Activated naive CD4-positive, alpha-beta T cell treated with anti-CD3 and anti-CD28 coated beads for 36 hours (primary cell): ENCODE measurements at regions of chr2 and their contacts with region 1.

Region 1: DNA sequence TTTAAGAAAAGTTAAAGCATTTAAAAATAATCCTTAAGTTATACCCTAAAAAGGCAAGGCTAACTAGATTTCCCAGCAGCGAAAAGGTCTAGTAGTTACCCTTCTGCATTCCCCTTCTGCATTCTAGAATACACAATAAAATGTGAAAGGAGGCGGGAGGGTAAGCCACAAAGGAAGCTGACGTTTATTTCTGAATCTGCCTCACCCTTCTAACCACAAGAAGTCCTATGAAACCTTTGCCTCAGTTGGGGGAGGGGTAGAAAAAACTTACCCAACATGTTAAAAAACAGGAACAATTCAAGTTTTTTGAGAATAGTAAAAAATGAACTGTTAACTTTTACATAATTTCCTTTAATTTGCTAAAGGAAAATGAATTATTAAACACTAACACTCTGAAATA is 11.3 kb downstream of the STK17B start:
- DNase-seq: peak; percentile 77
- H3K4me3 Mint-ChIP-seq: peak overlapping the region; percentile 36
- H3K27ac Mint-ChIP-seq: peak overlapping the region; percentile 96
- H3K4me1 Mint-ChIP-seq: peaks cover 67% of the 10 kb centered on the region
- H3K27me3 Mint-ChIP-seq: no peaks in the 10 kb centered on the region

Region 2: DNA sequence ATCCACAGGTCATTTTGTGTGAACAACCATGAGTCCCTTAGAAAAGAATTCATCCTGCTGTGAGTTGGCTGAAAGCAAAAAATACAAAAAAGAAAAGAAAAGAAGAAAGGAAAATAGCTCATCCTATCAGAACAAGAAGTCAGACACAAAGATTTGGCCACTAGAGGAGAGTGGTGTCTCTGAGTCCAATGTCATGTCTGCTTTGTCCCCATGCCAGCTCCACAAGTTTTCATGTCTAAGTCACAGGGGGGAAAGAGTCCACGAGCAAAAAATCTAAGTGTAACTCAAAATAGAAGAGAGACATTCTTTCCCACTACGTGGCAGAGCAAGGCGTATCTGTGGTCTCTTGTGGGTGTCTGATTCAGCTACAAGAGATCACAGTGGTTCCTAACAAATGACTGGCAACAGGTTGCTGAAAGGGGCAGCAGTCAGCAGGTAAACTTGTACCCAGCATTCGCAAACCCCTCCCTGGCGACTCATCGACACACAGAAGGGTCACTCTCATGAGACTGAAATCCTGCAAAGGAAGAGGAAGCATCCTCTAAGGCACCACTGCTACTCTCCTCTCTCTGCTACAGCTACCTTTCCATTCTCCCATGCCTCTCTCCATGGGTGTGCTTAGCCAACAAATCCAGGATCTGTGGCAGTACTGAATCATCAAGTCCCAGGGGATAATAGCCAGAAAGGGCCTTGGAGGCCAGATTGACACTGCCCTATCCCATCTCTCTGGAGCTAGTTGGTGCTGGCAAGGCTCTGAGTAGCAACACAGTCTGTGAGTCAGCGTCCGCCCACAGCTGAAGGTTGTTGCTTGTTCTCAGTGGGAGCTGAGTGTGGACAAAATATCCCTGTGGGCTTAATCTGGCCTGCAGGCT is 626.1 kb before region 1 on chr2:
- CTCF ChIA-PET with region 1: no interaction called
- intact Hi-C with region 1: loop called (anchors 2 kb)
- DNase-seq: peak; percentile 85
- H3K4me3 Mint-ChIP-seq: peak overlapping the region; percentile 75
- H3K27ac Mint-ChIP-seq: peak overlapping the region; percentile 98
- H3K4me1 Mint-ChIP-seq: peaks cover 79% of the 10 kb centered on the region
- H3K27me3 Mint-ChIP-seq: no peaks in the 10 kb centered on the region

Region 3: DNA sequence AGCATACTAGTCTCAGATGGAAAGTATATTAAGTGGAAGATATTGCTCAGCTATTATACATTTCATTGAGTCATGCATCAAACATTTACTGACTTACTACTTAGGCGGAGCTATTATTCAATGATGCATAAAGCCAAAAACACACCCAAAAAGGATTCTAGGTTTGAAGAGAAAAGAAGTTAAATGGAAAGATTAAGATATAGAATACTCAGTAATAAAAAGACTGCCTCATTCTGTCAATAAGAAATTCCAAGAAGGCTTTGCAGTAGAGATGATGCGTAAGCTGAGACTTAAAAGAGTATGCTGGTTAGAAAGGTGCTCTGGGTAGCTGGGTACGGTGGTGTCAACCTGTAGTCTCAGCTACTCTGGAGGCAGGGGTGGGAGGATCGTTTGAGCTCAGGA is 16.4 kb before region 1 on chr2:
- CTCF ChIA-PET with region 1: interaction called, 9 read pairs
- intact Hi-C with region 1: loop called (anchors 1 kb)
- DNase-seq: no peak
- H3K4me3 Mint-ChIP-seq: peak overlapping the region; percentile 29
- H3K27ac Mint-ChIP-seq: peak overlapping the region; percentile 89
- H3K4me1 Mint-ChIP-seq: peaks cover 70% of the 10 kb centered on the region
- H3K27me3 Mint-ChIP-seq: no peaks in the 10 kb centered on the region

Region 4: DNA sequence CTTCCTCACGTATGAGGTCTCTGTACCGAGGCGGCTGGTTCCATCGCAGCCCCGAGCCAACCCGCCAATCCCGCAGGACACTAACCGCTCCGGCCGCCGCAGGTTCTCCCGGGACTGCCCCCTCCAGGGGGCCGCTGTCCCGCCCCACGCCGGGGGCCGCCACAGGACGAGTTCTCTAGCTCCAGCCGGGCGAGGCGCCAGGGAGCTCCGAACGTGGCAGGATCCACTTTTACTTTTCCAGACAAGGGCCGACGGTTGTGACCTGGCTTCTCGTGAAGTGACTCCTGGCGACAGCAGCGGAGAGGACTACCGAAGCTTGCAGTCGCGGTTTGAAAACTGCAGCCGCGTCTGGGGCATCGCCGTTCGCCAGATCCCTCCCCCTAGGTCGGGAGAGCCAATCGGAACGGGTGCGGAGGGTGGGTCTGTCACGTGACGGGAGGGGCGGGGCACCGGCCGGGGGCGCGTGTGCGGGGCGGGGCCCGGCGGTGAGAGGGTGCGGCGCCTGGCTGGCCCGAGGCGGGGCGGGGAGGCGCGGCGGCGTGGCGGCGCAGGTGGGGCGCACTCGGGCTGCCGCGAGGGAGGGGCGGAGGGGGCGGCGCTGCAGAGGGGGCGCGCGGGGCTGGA is 11.3 kb after region 1 on chr2 and contains the start of gene STK17B:
- CTCF ChIA-PET with region 1: interaction called, 7 read pairs
- intact Hi-C with region 1: loop called (anchors 1 kb)
- DNase-seq: peak; percentile 98
- H3K4me3 Mint-ChIP-seq: peak within 1 kb of the TSS; percentile 93
- H3K27ac Mint-ChIP-seq: peak within 1 kb of the TSS; percentile 92
- H3K4me1 Mint-ChIP-seq: peaks cover 34% of the 10 kb centered on the region
- H3K27me3 Mint-ChIP-seq: no peaks in the 10 kb centered on the region
- total RNA-seq, gene STK17B: 141 to 143 TPM

Region 5: DNA sequence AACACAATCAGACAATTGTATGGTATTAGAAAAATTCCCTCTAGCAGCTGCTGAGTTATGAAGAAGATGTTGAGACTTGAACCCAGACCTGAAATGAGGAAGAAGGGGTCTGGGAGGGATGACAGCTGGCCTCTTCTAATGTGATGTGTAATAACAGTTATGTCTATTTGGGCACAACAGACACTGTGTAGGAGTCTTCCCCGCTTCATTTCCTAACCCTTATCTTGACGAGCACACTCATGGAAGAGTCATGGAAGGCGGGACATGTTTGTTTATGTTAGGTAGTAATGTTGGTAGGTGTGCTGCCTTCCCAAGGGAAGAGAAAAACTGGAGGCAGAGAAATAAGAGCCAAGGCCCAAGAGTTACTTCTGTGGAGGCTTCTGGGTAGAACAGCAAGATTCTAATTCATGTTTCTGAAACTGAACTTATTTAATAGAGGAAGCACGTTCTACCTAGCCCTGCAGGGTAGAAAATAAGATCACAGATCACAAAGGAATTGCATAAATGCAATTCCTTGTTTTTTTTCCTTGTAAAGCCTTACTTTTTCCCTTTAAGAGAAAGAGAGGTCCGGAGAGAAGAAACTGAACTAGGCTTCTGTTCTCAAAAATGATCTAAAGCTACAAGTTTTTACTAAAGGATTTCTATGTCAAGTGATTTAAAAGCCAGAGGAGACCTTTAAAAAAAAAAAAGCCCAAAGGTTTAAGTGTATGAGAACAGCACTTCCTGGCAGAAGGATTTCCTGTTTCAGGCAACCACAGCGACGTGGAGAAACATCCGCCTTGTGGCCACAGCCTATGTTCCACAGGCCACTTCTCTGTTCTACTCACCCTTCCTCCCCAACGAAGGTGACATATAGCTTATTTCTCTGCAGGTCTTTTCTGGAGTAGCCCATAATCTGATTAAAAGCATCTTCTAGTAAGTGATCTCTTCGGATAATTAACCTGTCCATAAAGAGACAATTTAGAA is 79.8 kb after region 1 on chr2:
- CTCF ChIA-PET with region 1: interaction called, 3 read pairs
- intact Hi-C with region 1: loop called (anchors 1 kb)
- DNase-seq: peak; percentile 93
- H3K4me3 Mint-ChIP-seq: peak overlapping the region; percentile 49
- H3K27ac Mint-ChIP-seq: peak overlapping the region; percentile 88
- H3K4me1 Mint-ChIP-seq: peaks cover 85% of the 10 kb centered on the region
- H3K27me3 Mint-ChIP-seq: no peaks in the 10 kb centered on the region

Region 6: DNA sequence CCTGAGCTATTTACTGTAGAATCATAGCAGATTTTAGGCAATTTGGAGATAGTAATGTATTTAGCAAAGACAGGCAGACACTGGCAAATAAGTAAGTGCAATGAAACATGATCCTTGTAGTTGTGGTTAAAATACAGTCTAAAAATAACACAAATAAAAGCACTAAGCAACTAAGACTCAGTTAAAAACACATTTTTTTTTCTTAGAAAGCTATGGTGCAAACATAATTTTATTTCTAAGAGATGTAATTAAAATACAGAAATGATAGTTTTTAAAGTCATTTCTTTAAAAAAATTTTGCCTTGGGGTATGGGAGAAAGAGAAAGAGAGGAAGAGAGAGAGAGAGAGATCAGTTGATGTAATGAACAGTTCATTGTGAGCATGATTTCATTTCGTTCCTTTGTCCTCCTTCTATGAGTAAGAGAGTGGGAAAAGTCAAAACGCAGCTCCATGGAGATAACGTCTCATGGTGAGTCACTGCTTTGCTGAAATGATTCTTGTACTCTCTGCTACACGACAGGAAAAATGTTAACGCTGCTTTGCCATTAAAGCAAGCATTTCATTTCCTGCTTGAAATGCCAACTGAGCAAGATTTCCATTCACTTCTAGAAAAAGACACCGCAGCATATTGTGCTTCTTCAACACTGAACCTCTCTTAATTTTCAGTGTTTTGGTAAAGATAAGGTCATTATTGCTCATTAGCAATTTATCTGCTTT is 827.7 kb after region 1 on chr2:
- CTCF ChIA-PET with region 1: no interaction called
- intact Hi-C with region 1: loop called (anchors 5 kb)
- DNase-seq: peak; percentile 76
- H3K4me3 Mint-ChIP-seq: peak overlapping the region; percentile 17
- H3K27ac Mint-ChIP-seq: peak overlapping the region; percentile 98
- H3K4me1 Mint-ChIP-seq: peaks cover 78% of the 10 kb centered on the region
- H3K27me3 Mint-ChIP-seq: no peaks in the 10 kb centered on the region

Region 7: GRCh38 chr2:197293252-197294007 is 1133.3 kb after region 1 on chr2:
- CTCF ChIA-PET with region 1: no interaction called
- intact Hi-C with region 1: loop called (anchors 2 kb)
- DNase-seq: peak; percentile 48
- H3K4me3 Mint-ChIP-seq: peak overlapping the region; percentile 57
- H3K27ac Mint-ChIP-seq: peak overlapping the region; percentile 92
- H3K4me1 Mint-ChIP-seq: peaks cover 87% of the 10 kb centered on the region
- H3K27me3 Mint-ChIP-seq: no peaks in the 10 kb centered on the region